Aorta (tissue), 5 donors: ENCODE measurements at regions of chr6 and their contacts with region 1.

Region 1: GRCh38 chr6:1901556-1901955 is 291.8 kb downstream of the FOXC1 start:
- DNase-seq: no peak
- ATAC-seq: no peak
- H3K4me3 ChIP-seq: no peak overlapping the region
- H3K27ac ChIP-seq: peak overlapping the region; percentile 16 to 53
- H3K4me1 ChIP-seq: peaks cover 6 to 9% of the 10 kb centered on the region in 2 donors
- H3K27me3 ChIP-seq: no peaks in the 10 kb centered on the region

Region 2: DNA sequence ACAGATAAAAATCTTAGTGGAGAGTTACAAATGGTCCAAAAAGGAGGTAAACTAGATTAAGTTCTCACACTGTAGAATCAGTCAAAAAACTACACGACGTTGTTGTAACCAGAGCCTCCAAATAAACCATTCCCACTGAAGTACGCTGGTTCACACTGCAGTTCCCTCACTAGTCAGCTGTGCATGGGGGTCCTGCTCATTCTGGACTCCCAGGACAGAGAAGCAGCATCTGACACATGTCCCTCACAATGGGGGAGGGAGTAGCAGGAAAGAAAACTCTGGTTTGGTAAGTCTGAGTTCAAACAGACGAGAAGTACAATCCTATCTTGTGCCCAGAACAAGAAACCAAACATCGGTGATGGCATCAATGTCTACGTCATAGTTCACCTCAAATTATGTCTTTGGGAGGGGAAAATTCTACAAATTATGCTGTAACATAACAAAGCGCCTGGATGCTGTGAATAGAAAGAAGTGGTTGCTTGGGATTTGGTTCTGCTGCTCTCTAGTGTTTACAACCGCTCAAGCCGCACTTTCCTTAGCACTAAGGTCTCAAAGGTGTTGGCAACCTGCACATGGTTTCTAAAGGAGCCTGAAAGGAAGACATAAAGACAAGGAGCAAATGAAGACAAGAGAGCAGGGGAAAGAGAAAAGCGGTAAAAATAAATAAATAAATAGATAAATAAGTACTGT is 135.8 kb after region 1 on chr6:
- intact Hi-C with region 1: loop called in 1 of 2 experiments (anchors 10 kb)
- DNase-seq: no peak
- ATAC-seq: no peak
- H3K4me3 ChIP-seq: no peak overlapping the region
- H3K27ac ChIP-seq: peak overlapping the region in 1 of 2 donors; percentile 40
- H3K4me1 ChIP-seq: no peaks in the 10 kb centered on the region
- H3K27me3 ChIP-seq: no peaks in the 10 kb centered on the region

Region 3: GRCh38 chr6:2097464-2097863 is 195.9 kb after region 1 on chr6:
- intact Hi-C with region 1: loop called (anchors 5 kb)
- DNase-seq: no peak
- ATAC-seq: no peak
- H3K4me3 ChIP-seq: peak overlapping the region; percentile 31 to 48
- H3K27ac ChIP-seq: peak overlapping the region; percentile 47 to 76
- H3K4me1 ChIP-seq: peaks cover 0 to 2% of the 10 kb centered on the region in 2 donors
- H3K27me3 ChIP-seq: no peaks in the 10 kb centered on the region